ENCODE measurements at regions of chr4 and their contacts with region 1.

Region 1: DNA sequence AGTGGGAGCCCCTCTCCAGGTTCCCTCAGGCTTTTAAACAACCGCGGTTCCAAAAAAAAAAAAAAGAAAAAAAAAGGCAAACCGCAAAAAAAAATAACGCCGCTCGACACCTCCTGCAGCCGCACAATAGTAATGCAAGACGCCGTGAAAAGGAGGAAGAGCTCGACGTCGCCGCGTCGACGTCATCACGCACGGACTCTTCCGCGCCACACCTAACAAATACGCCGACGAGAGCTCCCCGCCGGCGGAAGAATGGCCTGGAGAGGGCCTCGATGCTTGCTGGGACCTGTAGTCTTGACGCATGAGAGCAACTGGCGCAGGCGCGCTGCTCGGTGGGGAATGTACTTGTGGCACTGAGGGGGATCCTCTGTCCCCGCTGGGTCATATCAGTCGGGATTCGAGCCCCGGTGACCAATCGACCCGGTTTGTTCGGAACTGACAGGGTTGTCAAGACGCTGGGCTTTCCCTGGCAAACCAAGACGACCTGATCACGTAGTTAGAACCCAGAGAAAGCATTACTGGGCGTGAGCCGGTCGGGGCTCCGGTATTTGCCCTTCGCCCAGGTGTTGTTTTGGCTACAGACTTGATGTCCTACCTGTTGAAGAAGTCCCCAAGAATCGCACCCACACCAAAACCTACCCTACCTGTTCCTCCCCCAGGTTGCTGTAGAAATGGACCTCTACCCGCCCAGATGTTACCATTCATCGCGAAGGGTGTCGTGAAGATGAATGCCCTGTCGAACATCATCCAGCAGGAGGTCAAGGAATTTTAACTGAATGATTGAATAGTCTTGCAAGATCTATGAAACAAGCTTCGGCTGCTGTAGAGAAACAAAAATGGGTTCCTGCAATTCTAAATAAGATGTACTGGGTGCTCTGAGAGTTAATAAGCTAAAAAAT is at the start of gene CBR4:
- DNase-seq: peak; percentile 90 to 99
- ATAC-seq: peak; percentile 94 to 98 (median 94)
- H3K4me3 ChIP-seq: peak within 1 kb of the TSS; percentile 93
- H3K4me3 Mint-ChIP-seq: peak within 1 kb of the TSS; percentile 88
- H3K27ac ChIP-seq: peak within 1 kb of the TSS; percentile 98
- H3K27ac Mint-ChIP-seq: peak within 1 kb of the TSS; percentile 93 to 99
- H3K4me1 ChIP-seq: peaks cover 24% of the 10 kb centered on the region
- H3K4me1 Mint-ChIP-seq: peaks cover 56 to 59% of the 10 kb centered on the region in 2 donors
- H3K27me3 ChIP-seq: no peaks in the 10 kb centered on the region
- H3K27me3 Mint-ChIP-seq: no peaks in the 10 kb centered on the region
- CTCF ChIP-seq: peak; percentile 2
- total RNA-seq, gene CBR4: 17.2 to 28.1 (median 20.3) TPM

Region 2: GRCh38 chr4:168480931-168481611 is 529.3 kb before region 1 on chr4:
- intact Hi-C with region 1: loop called (anchors 1 kb)
- DNase-seq: peak; percentile 28 to 86
- ATAC-seq: peak; percentile 50 to 77 (median 64)
- H3K4me3 ChIP-seq: peak overlapping the region; percentile 71
- H3K4me3 Mint-ChIP-seq: peak overlapping the region; percentile 96
- H3K27ac ChIP-seq: peak overlapping the region; percentile 95
- H3K27ac Mint-ChIP-seq: peak overlapping the region; percentile 97 to 100
- H3K4me1 ChIP-seq: peaks cover 3% of the 10 kb centered on the region
- H3K4me1 Mint-ChIP-seq: peaks cover 41 to 49% of the 10 kb centered on the region in 2 donors
- H3K27me3 ChIP-seq: no peaks in the 10 kb centered on the region
- H3K27me3 Mint-ChIP-seq: peaks cover 9 to 16% of the 10 kb centered on the region in 2 donors
- CTCF ChIP-seq: no peak

Region 3: GRCh38 chr4:168831919-168832762 is 178.2 kb before region 1 on chr4:
- intact Hi-C with region 1: loop called (anchors 10 kb)
- DNase-seq: peak; percentile 66 to 68
- ATAC-seq: peak; percentile 90 to 95 (median 93)
- H3K4me3 ChIP-seq: peak overlapping the region; percentile 45
- H3K4me3 Mint-ChIP-seq: peak overlapping the region; percentile 84
- H3K27ac ChIP-seq: no peak overlapping the region
- H3K27ac Mint-ChIP-seq: peak overlapping the region in 1 of 2 donors; percentile 86
- H3K4me1 ChIP-seq: peaks cover 20% of the 10 kb centered on the region
- H3K4me1 Mint-ChIP-seq: peaks cover 6 to 31% of the 10 kb centered on the region in 2 donors
- H3K27me3 ChIP-seq: peaks cover 24% of the 10 kb centered on the region
- H3K27me3 Mint-ChIP-seq: peaks cover 52 to 67% of the 10 kb centered on the region in 2 donors
- CTCF ChIP-seq: no peak

Region 4: GRCh38 chr4:169612871-169613859 is 602.8 kb after region 1 on chr4:
- intact Hi-C with region 1: loop called (anchors 5 kb)
- DNase-seq: peak; percentile 67 to 86
- ATAC-seq: peak; percentile 40 to 55 (median 40)
- H3K4me3 ChIP-seq: peak overlapping the region; percentile 96
- H3K4me3 Mint-ChIP-seq: peak overlapping the region; percentile 98
- H3K27ac ChIP-seq: peak overlapping the region; percentile 99
- H3K27ac Mint-ChIP-seq: peak overlapping the region; percentile 98
- H3K4me1 ChIP-seq: peaks cover 4% of the 10 kb centered on the region
- H3K4me1 Mint-ChIP-seq: peaks cover 26 to 29% of the 10 kb centered on the region in 2 donors
- H3K27me3 ChIP-seq: no peaks in the 10 kb centered on the region
- H3K27me3 Mint-ChIP-seq: no peaks in the 10 kb centered on the region
- CTCF ChIP-seq: peak; percentile 75

Region 5: DNA sequence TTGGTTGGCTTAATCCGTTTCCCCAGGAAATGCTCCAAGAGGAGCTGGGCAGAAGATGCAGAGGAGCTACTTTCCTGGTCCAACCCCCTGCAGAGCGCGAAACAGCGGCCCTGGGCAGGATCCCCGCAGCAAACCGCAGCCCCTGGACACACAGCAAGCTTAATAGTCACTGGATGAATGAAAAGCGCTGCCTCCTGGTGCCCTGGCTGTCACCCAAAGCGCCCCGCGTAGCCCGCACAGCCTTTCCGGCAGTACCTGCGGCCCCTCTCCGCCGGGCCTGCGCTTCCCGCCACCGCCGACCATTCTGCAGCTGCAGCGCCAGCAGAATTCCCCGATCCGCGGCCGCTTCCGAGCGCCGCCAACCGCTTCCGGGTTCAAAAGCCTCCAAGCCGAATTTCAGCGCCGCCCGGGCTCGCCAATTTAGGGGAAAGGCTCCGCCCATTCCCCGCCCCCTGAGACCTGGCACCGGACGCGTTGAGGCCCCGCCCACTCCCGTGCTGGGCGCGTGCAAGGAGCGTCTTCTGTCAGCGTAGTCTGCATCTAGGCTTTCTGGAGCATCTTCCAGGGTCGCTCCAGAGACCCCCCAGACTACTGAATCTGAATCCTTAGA is 747.3 kb after region 1 on chr4 and contains the start of gene HPF1:
- intact Hi-C with region 1: loop called (anchors 10 kb)
- DNase-seq: peak; percentile 92 to 98
- ATAC-seq: peak; percentile 96
- H3K4me3 ChIP-seq: peak within 1 kb of the TSS; percentile 91
- H3K4me3 Mint-ChIP-seq: peak within 1 kb of the TSS; percentile 87
- H3K27ac ChIP-seq: peak within 1 kb of the TSS; percentile 22
- H3K27ac Mint-ChIP-seq: peak within 1 kb of the TSS; percentile 17 to 81
- H3K4me1 ChIP-seq: peaks cover 16% of the 10 kb centered on the region
- H3K4me1 Mint-ChIP-seq: peaks cover 36 to 38% of the 10 kb centered on the region in 2 donors
- H3K27me3 ChIP-seq: no peaks in the 10 kb centered on the region
- H3K27me3 Mint-ChIP-seq: no peaks in the 10 kb centered on the region
- CTCF ChIP-seq: no peak
- total RNA-seq, gene HPF1: 12.9 to 16.1 (median 14.6) TPM